ENCODE measurements at regions of chr12 and their contacts with region 1.

Region 1: DNA sequence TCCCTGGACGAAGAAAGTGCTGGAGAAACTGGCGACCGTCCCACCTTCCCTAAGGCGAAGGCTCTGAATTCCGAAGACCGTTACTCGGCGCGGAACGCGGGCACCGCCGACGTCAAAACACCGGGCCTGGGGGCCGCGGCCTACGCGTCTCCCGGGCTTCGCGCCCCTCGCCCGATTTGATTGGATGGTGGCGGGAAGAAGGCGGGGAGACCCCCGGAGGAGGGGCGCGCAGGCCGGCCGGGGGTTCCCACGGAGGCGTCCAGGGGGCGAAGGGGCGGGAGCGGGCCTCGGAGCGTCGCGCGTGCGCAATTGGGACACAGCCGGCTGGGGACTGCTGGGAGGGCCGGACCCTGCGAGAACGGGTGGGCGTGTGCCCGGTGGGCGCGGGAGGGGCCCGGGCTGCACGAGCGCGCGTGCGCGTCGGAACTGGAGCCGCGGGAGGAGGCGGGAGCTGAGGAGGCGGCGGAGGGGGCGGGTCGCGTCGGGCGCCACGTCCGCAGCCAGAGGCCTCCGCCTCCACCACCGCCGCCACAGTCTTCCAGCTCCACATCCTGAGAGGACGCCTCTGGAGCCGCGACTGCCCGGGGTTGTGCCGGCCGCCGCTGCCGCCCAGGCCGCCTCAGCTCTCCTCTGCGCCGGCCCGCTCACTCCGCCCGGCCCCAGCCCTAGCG is at the start of gene TMEM263:
- DNase-seq: peak; percentile 89
- H3K4me3 Mint-ChIP-seq: peak within 1 kb of the TSS; percentile 94
- H3K27ac Mint-ChIP-seq: peak within 1 kb of the TSS; percentile 81
- H3K4me1 Mint-ChIP-seq: peaks cover 20% of the 10 kb centered on the region
- H3K27me3 Mint-ChIP-seq: peaks cover 6% of the 10 kb centered on the region
- total RNA-seq, gene TMEM263: 26.0 to 27.0 TPM

Region 2: DNA sequence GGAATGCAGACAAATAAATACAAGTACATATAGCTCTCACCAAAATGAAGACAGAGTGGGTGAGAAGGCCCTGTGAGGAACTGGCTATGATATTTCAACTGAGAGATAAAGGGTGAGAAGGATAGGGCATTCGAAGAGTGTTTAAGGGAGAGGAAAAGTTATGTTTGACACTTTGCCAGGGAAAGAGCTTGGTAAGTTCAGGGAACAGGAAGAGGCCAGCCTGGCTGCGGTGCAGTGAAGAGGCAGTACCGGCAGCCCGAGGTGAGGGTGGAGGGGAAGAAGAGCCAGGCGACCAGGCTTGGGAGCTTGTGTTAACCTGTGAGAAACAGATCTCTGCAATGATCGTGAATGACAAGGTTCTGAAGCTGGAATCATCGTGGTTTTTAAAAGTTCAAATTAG is 457.5 kb before region 1 on chr12:
- CTCF ChIA-PET with region 1: no interaction called
- POLR2A ChIA-PET with region 1: no interaction called
- DNase-seq: no peak
- H3K4me3 Mint-ChIP-seq: no peak overlapping the region
- H3K27ac Mint-ChIP-seq: no peak overlapping the region
- H3K4me1 Mint-ChIP-seq: peaks cover 2% of the 10 kb centered on the region
- H3K27me3 Mint-ChIP-seq: no peaks in the 10 kb centered on the region

Region 3: GRCh38 chr12:106790020-106790419 is 165.5 kb before region 1 on chr12:
- CTCF ChIA-PET with region 1: no interaction called
- POLR2A ChIA-PET with region 1: no interaction called
- DNase-seq: no peak
- H3K4me3 Mint-ChIP-seq: no peak overlapping the region
- H3K27ac Mint-ChIP-seq: no peak overlapping the region
- H3K4me1 Mint-ChIP-seq: no peaks in the 10 kb centered on the region
- H3K27me3 Mint-ChIP-seq: no peaks in the 10 kb centered on the region

Region 4: GRCh38 chr12:106986625-106987430 is 31.3 kb after region 1 on chr12 and contains the start of gene MTERF2:
- CTCF ChIA-PET with region 1: no interaction called
- POLR2A ChIA-PET with region 1: interaction called, 12 read pairs
- DNase-seq: peak; percentile 83
- H3K4me3 Mint-ChIP-seq: peak within 1 kb of the TSS; percentile 88
- H3K27ac Mint-ChIP-seq: peak within 1 kb of the TSS; percentile 66
- H3K4me1 Mint-ChIP-seq: peaks cover 33% of the 10 kb centered on the region
- H3K27me3 Mint-ChIP-seq: no peaks in the 10 kb centered on the region
- total RNA-seq, gene MTERF2: 5.5 to 6.4 TPM

Region 5: GRCh38 chr12:107236824-107237511 is 281.5 kb after region 1 on chr12:
- CTCF ChIA-PET with region 1: no interaction called
- POLR2A ChIA-PET with region 1: no interaction called
- DNase-seq: no peak
- H3K4me3 Mint-ChIP-seq: no peak overlapping the region
- H3K27ac Mint-ChIP-seq: no peak overlapping the region
- H3K4me1 Mint-ChIP-seq: peaks cover 6% of the 10 kb centered on the region
- H3K27me3 Mint-ChIP-seq: peaks cover 28% of the 10 kb centered on the region

Measured in activated CD4-positive, alpha-beta memory T cell treated with anti-CD3 and anti-CD28 coated beads, Interleukin-2, amount 10 ng/mL, durations not matched to agents 7 days and 5 days (primary cell).